T-cell (primary cell): ENCODE measurements at regions of chr11 and their contacts with region 1.

Region 1: DNA sequence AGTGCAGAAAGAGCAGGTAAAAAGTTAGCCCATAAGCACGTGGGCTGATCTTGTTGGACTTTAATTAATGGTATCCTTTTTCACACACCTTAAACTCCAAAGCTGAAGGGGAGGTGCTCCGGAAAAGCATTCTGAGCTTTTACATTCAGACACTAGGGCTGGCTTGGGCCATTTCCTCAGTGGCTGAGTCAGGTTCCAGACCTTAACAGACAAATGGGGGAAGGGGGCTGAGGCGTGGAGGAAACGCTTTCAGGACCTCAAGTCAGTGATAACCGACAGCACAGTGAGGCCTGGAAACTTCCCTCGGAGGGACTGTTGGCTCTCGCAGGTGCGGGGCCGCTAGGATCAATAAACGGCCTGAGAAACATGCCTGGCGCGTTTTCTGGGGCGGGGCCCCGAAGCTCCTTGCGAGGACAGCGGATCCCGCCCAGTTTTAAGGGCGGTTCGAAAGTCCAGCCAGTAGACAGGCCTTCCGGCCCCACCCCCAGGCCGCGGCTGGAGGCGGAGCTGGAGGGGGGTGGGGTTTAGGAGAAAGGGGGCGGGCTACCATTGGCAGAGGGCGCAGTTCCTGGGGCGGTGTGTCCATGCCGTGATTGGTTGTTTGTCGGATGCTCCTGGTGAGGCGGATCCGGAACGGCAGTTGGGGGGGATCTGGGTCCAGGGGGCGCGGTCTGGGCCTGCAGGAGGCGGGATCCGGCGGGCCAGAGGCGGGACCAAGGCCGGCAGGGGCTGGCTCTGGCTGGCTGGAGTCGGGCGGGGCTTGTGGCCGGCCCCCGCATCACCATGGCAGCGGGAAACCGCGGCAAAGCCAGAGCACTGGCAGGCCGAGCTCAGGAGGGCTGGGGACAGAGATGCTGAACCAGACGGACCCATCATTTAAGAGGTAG is 8.0 kb downstream of the C11orf52 start:
- DNase-seq: peak; percentile 85 to 98 (median 92)
- ATAC-seq: peak; percentile 90 to 95 (median 91)
- H3K4me3 ChIP-seq: peak overlapping the region; percentile 38 to 58
- H3K4me3 Mint-ChIP-seq: peak overlapping the region; percentile 79 to 82 (median 80)
- H3K27ac ChIP-seq: peak overlapping the region; percentile 86
- H3K27ac Mint-ChIP-seq: peak overlapping the region; percentile 92 to 93
- H3K4me1 ChIP-seq: peaks cover 2 to 19% of the 10 kb centered on the region in 2 experiments
- H3K4me1 Mint-ChIP-seq: peaks cover 11 to 15% (median 14%) of the 10 kb centered on the region in 3 donors
- H3K27me3 ChIP-seq: no peaks in the 10 kb centered on the region
- H3K27me3 Mint-ChIP-seq: no peaks in the 10 kb centered on the region

Region 2: DNA sequence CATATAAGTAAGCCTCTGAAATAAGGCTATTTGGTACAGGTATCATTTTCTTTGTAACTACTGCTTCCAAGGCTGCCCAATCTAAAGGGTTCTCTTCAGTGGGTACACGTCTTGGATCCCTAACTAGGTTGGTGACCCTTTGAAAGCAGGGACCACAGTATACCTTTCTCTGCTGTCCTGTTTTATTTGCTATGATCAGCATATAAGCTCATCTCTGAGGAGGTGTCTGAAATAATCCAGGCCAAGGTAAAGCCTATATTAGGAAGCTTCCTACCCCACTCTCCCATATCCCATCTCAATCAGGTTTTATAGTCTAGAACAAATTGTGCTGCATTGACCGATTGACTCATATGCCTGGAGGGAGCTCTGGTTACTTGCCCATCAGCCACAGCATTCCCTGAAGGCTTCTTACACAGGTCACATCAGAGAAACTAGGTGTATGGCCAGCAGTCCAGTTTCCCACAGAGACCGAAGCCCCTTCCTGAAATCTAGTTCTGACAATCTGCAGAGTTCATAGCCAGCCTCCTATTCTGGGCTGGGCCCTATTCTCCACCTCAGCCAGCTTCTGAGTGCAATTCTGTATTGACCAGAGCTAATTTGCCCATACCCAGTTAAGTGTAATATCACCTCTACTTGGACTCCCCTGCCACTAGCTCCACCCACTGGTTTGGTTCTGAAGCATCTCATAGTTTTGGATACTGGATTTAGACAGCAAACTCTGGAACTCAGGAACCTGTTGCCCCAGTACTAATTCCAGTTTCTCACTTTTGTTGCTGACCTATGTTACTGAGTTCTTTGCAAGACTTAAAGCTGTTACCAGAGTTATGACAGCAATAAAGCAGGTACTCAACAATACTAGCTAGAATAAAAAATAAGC is 1152.4 kb before region 1 on chr11:
- CTCF ChIA-PET with region 1: no interaction called
- POLR2A ChIA-PET with region 1: no interaction called
- DNase-seq: no peak
- ATAC-seq: no peak
- H3K4me3 ChIP-seq: no peak overlapping the region
- H3K4me3 Mint-ChIP-seq: no peak overlapping the region
- H3K27ac ChIP-seq: no peak overlapping the region
- H3K27ac Mint-ChIP-seq: no peak overlapping the region
- H3K4me1 ChIP-seq: no peaks in the 10 kb centered on the region
- H3K4me1 Mint-ChIP-seq: peaks cover 0 to 3% (median 3%) of the 10 kb centered on the region in 3 donors
- H3K27me3 ChIP-seq: no peaks in the 10 kb centered on the region
- H3K27me3 Mint-ChIP-seq: no peaks in the 10 kb centered on the region

Region 3: GRCh38 chr11:111870886-111871692 is 55.7 kb before region 1 on chr11 and contains the start of gene ALG9:
- CTCF ChIA-PET with region 1: interaction called, 3 to 20 read pairs
- POLR2A ChIA-PET with region 1: interaction called in 1 of 2 experiments, 3 read pairs
- DNase-seq: peak; percentile 71 to 92 (median 86)
- ATAC-seq: peak; percentile 89 to 91 (median 90)
- H3K4me3 ChIP-seq: peak within 1 kb of the TSS; percentile 72 to 79
- H3K4me3 Mint-ChIP-seq: peak within 1 kb of the TSS; percentile 90 to 94 (median 91)
- H3K27ac ChIP-seq: peak within 1 kb of the TSS; percentile 76
- H3K27ac Mint-ChIP-seq: peak within 1 kb of the TSS; percentile 93 to 94
- H3K4me1 ChIP-seq: peaks cover 4 to 8% of the 10 kb centered on the region in 2 experiments
- H3K4me1 Mint-ChIP-seq: peaks cover 18 to 26% (median 22%) of the 10 kb centered on the region in 3 donors
- H3K27me3 ChIP-seq: no peaks in the 10 kb centered on the region
- H3K27me3 Mint-ChIP-seq: no peaks in the 10 kb centered on the region
- total RNA-seq, gene ALG9: 20.0 to 25.6 (median 24.0) TPM

Region 4: DNA sequence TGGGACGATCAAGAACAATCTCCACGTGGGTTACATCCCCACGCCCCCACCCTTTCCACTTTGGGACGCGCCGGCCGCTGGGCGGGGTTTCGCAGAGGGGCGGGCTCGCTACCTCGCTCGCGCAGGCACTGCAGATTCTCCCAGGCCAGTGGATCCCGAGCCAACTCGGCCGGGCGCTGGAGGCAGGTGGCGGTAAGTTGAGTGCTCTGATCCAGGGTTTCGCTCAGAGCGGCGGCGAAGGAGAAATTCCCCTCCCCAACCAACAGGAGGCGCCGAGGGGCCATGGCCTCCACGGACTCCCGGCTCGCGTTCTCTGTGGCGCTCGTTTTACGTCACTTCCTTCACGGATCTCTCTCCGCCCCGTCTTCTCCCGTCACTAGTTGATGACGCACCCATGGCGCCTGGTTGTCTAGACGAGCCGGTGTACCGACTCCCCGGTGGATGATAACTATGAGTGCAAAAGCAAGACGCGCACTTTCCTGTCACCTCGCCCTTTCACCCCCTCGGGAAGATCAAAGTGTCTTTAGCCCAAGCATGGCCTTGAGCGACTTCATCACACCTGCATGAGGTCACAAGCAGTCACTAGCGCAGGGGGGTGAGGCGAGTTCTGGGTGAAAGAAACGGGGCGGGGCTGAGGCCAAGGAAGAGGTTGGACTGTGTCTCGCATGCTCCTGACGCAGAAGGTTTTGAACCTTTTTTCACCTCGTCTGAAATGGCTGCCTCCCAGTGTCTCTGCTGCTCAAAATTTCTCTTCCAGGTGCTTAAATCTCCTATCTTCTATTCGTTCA is 47.7 kb before region 1 on chr11 and contains the starts of genes CFAP68 and FDXACB1:
- CTCF ChIA-PET with region 1: interaction called, 6 read pairs
- POLR2A ChIA-PET with region 1: interaction called in 1 of 2 experiments, 12 read pairs
- DNase-seq: peak; percentile 91 to 98 (median 95)
- ATAC-seq: peak; percentile 85 to 91 (median 87)
- H3K4me3 ChIP-seq: peak within 1 kb of the TSS; percentile 78 to 80
- H3K4me3 Mint-ChIP-seq: peak within 1 kb of the TSS; percentile 81 to 91 (median 91)
- H3K27ac ChIP-seq: peak within 1 kb of the TSS; percentile 98
- H3K27ac Mint-ChIP-seq: peak within 1 kb of the TSS; percentile 97 to 98
- H3K4me1 ChIP-seq: peaks cover 2 to 12% of the 10 kb centered on the region in 2 experiments
- H3K4me1 Mint-ChIP-seq: peaks cover 16 to 25% (median 22%) of the 10 kb centered on the region in 3 donors
- H3K27me3 ChIP-seq: no peaks in the 10 kb centered on the region
- H3K27me3 Mint-ChIP-seq: no peaks in the 10 kb centered on the region
- total RNA-seq, gene CFAP68: 12.0 to 18.6 (median 16.7) TPM
- total RNA-seq, gene FDXACB1: 3.8 to 6.0 (median 4.3) TPM

Region 5: DNA sequence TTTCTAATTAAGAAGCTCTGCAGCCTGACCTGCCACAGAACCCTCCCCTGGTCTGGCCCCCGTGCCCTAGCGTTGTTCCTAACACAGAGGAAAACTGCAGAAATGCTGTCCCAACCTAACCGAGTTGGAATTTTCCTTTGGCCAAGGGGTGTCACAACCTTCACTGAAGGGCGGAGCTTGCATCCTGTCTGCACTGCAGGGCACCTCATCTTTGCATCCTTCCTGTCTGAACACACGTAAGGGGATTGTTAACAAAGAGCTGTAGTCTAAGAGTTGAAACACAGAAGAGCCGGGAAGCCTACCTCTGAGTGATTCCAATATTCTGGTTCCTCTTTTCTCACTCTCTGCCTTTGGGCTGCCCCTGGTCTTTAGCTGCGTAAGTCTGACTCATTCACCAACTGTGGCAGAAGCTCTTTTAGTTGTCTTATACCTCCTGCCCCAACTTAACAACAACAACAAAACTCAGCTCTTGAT is 12.0 kb after region 1 on chr11:
- CTCF ChIA-PET with region 1: interaction called, 5 to 13 read pairs
- POLR2A ChIA-PET with region 1: interaction called, 4 to 7 read pairs
- DNase-seq: peak in 10 of 35 experiments; percentile 4 to 51 (median 18)
- ATAC-seq: peak; percentile 56 to 81 (median 66)
- H3K4me3 ChIP-seq: no peak overlapping the region
- H3K4me3 Mint-ChIP-seq: peak overlapping the region; percentile 54 to 93 (median 81)
- H3K27ac ChIP-seq: peak overlapping the region; percentile 54
- H3K27ac Mint-ChIP-seq: peak overlapping the region; percentile 71 to 90
- H3K4me1 ChIP-seq: peaks cover 13 to 28% of the 10 kb centered on the region in 2 experiments
- H3K4me1 Mint-ChIP-seq: peaks cover 30 to 37% (median 31%) of the 10 kb centered on the region in 3 donors
- H3K27me3 ChIP-seq: no peaks in the 10 kb centered on the region
- H3K27me3 Mint-ChIP-seq: no peaks in the 10 kb centered on the region

Region 6: DNA sequence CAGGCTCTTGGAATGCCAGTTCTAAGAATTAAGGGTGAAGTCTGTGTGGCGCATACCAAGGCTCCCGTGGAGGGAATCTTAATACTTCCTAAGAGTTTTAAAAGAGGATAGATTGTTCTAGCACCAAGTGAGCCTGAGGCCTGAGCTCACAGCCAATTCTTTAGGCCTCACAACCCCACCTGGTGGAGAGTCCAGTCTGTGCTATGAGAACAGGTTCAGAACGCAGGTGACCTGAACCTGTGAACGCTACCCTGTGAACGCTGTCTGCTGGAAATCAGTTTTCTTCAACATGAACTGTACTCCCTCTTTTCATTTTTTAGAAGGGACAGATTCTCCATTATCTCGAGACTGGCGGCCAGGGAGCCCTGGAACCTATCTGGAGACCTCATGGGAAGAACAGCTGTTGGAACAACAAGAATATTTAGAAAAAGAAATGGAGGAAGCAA is 55.3 kb after region 1 on chr11:
- CTCF ChIA-PET with region 1: interaction called, 11 to 19 read pairs
- POLR2A ChIA-PET with region 1: interaction called in 1 of 2 experiments, 5 read pairs
- DNase-seq: peak in 32 of 35 experiments; percentile 13 to 65 (median 44)
- ATAC-seq: peak in 3 of 4 experiments; percentile 44 to 89 (median 54)
- H3K4me3 ChIP-seq: no peak overlapping the region
- H3K4me3 Mint-ChIP-seq: no peak overlapping the region
- H3K27ac ChIP-seq: no peak overlapping the region
- H3K27ac Mint-ChIP-seq: no peak overlapping the region
- H3K4me1 ChIP-seq: peaks cover 0 to 9% of the 10 kb centered on the region in 2 experiments
- H3K4me1 Mint-ChIP-seq: peaks cover 7 to 11% (median 7%) of the 10 kb centered on the region in 3 donors
- H3K27me3 ChIP-seq: peaks cover 3 to 17% of the 10 kb centered on the region in 2 experiments
- H3K27me3 Mint-ChIP-seq: peaks cover 22 to 23% of the 10 kb centered on the region in 2 donors

Region 7: GRCh38 chr11:112086422-112087191 is 159.9 kb after region 1 on chr11 and contains the starts of genes SDHD and TIMM8B:
- CTCF ChIA-PET with region 1: interaction called in 1 of 2 experiments, 11 read pairs
- POLR2A ChIA-PET with region 1: interaction called in 1 of 2 experiments, 13 read pairs
- DNase-seq: peak; percentile 90 to 98 (median 95)
- ATAC-seq: peak; percentile 91 to 94 (median 93)
- H3K4me3 ChIP-seq: peak within 1 kb of the TSS; percentile 86 to 98
- H3K4me3 Mint-ChIP-seq: peak within 1 kb of the TSS; percentile 92 to 99 (median 99)
- H3K27ac ChIP-seq: peak within 1 kb of the TSS; percentile 50
- H3K27ac Mint-ChIP-seq: peak within 1 kb of the TSS; percentile 98 to 99
- H3K4me1 ChIP-seq: peaks cover 17 to 26% of the 10 kb centered on the region in 2 experiments
- H3K4me1 Mint-ChIP-seq: peaks cover 54 to 58% (median 57%) of the 10 kb centered on the region in 3 donors
- H3K27me3 ChIP-seq: no peaks in the 10 kb centered on the region
- H3K27me3 Mint-ChIP-seq: no peaks in the 10 kb centered on the region
- total RNA-seq, gene SDHD: 34.3 to 71.9 (median 69.6) TPM
- total RNA-seq, gene TIMM8B: 13.8 to 23.7 (median 21.1) TPM